T-cell (primary cell): ENCODE measurements at regions of chr10 and their contacts with region 1.

Region 1: DNA sequence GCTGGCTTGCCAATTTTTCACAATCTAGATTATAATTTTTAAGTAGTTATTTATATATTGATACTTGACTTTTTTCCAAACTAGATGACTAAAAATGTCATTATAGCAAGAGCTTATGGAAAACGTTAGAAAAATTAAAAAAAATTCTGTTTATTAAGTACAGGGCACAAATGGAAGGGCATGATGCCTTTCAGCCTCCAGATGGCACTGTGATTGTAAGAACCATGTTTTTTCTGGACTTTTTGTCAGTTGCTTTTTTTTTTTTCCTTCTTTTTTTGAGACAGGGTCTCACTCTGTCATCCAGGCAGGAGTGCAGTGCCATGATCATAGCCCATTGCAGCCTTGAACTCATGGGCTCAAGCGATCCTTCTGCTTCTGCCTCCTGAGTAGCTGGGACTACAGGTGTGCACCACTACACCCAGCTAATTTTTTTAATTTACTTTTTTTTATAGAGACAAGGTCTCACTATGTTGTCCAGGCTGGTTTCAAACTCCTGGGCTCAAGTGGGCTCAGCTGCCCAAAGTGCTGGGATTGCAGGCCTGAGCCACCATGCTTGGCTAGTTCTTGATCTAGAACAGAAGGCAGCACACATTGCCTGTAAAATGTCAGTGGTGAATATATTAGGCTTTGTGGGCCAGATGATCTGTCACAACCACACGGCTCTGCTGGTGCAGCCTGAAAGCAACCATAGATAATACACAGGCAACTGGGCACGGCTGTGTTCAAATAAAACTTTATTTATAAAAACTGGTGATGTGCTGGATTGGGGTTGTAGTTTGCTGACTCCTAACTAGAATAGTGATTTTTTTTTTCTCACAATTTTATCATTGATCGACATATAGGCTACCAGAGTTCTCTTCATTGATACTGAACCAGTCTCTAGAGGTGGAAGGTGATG is 27.4 kb downstream of the UCMA start:
- DNase-seq: peak in 2 of 35 experiments; percentile 7 to 31
- ATAC-seq: no peak
- H3K4me3 ChIP-seq: no peak overlapping the region
- H3K4me3 Mint-ChIP-seq: no peak overlapping the region
- H3K27ac ChIP-seq: no peak overlapping the region
- H3K27ac Mint-ChIP-seq: no peak overlapping the region
- H3K4me1 ChIP-seq: no peaks in the 10 kb centered on the region
- H3K4me1 Mint-ChIP-seq: no peaks in the 10 kb centered on the region
- H3K27me3 ChIP-seq: no peaks in the 10 kb centered on the region
- H3K27me3 Mint-ChIP-seq: no peaks in the 10 kb centered on the region

Region 2: GRCh38 chr10:13225601-13226000 is 18.8 kb after region 1 on chr10:
- CTCF ChIA-PET with region 1: interaction called in 1 of 2 experiments, 4 read pairs
- POLR2A ChIA-PET with region 1: interaction called in 1 of 2 experiments, 14 read pairs
- DNase-seq: no peak
- ATAC-seq: no peak
- H3K4me3 ChIP-seq: no peak overlapping the region
- H3K4me3 Mint-ChIP-seq: no peak overlapping the region
- H3K27ac ChIP-seq: no peak overlapping the region
- H3K27ac Mint-ChIP-seq: no peak overlapping the region
- H3K4me1 ChIP-seq: no peaks in the 10 kb centered on the region
- H3K4me1 Mint-ChIP-seq: no peaks in the 10 kb centered on the region
- H3K27me3 ChIP-seq: peaks cover 0 to 4% of the 10 kb centered on the region in 2 experiments
- H3K27me3 Mint-ChIP-seq: no peaks in the 10 kb centered on the region

Region 3: GRCh38 chr10:13659897-13660550 is 453.2 kb after region 1 on chr10:
- CTCF ChIA-PET with region 1: interaction called in 1 of 2 experiments, 14 read pairs
- POLR2A ChIA-PET with region 1: no interaction called
- DNase-seq: peak; percentile 23 to 77 (median 61)
- ATAC-seq: peak; percentile 44 to 65 (median 58)
- H3K4me3 ChIP-seq: peak overlapping the region in 1 of 2 donors; percentile 35
- H3K4me3 Mint-ChIP-seq: peak overlapping the region in 1 of 3 donors; percentile 45
- H3K27ac ChIP-seq: no peak overlapping the region
- H3K27ac Mint-ChIP-seq: no peak overlapping the region
- H3K4me1 ChIP-seq: peaks cover 9 to 20% of the 10 kb centered on the region in 2 experiments
- H3K4me1 Mint-ChIP-seq: peaks cover 9 to 21% (median 11%) of the 10 kb centered on the region in 3 donors
- H3K27me3 ChIP-seq: peaks cover 0 to 6% of the 10 kb centered on the region in 2 experiments
- H3K27me3 Mint-ChIP-seq: no peaks in the 10 kb centered on the region